Body of pancreas (tissue), 4 donors: ENCODE measurements at regions of chr5 and their contacts with region 1.

Region 1: DNA sequence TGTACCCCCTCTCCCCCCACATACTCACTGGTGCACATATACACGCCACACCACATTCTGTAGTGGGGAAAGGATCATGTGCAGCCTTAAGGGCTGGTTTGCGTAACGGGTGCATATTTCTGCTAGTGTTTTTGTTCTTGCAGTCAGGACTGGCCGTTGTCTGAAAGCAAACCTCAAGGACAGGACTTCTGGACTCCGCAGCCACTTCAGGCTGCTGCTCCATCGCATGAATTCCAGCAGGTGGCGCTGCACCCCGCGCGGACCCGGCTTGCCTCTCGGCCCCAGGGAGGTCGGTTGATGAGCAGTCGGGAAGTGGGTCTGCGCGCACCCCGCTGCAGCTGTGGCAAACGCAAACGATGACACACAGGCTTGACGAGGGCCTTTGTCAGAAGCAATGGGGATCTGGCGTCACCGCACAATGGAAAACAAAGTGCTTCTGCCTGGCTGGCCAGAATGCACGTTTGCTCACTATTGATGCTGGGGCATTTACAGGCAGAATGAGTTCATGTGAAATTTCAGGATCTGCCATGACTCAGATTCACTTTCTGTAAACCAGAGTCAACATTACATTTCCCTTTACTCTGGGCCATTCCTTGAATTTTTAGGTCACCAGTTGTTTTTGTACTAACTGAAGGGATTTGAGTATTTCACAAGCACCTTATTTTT is 36.3 kb upstream of the GLRX start:
- DNase-seq: peak; percentile 84 to 91 (median 86)
- ATAC-seq: peak; percentile 81
- H3K4me3 ChIP-seq: no peak overlapping the region
- H3K27ac ChIP-seq: peak overlapping the region; percentile 72 to 89 (median 79)
- H3K4me1 ChIP-seq: peaks cover 63% of the 10 kb centered on the region
- H3K27me3 ChIP-seq: no peaks in the 10 kb centered on the region
- CTCF ChIP-seq: peak; percentile 97 to 99 (median 98)
- POLR2A ChIP-seq: peak in 2 of 3 donors; percentile 41 to 42

Region 2: GRCh38 chr5:95961617-95962474 is 103.1 kb after region 1 on chr5 and contains the start of gene ELL2:
- intact Hi-C with region 1: no loop called
- DNase-seq: peak; percentile 99 to 100 (median 99)
- ATAC-seq: peak; percentile 87
- H3K4me3 ChIP-seq: peak within 1 kb of the TSS; percentile 28 to 98
- H3K27ac ChIP-seq: peak within 1 kb of the TSS; percentile 97 to 100 (median 100)
- H3K4me1 ChIP-seq: peaks cover 45% of the 10 kb centered on the region
- H3K27me3 ChIP-seq: no peaks in the 10 kb centered on the region
- CTCF ChIP-seq: no peak
- POLR2A ChIP-seq: peak; percentile 95 to 99 (median 98)
- total RNA-seq, gene ELL2: 100 to 104 TPM

Region 3: DNA sequence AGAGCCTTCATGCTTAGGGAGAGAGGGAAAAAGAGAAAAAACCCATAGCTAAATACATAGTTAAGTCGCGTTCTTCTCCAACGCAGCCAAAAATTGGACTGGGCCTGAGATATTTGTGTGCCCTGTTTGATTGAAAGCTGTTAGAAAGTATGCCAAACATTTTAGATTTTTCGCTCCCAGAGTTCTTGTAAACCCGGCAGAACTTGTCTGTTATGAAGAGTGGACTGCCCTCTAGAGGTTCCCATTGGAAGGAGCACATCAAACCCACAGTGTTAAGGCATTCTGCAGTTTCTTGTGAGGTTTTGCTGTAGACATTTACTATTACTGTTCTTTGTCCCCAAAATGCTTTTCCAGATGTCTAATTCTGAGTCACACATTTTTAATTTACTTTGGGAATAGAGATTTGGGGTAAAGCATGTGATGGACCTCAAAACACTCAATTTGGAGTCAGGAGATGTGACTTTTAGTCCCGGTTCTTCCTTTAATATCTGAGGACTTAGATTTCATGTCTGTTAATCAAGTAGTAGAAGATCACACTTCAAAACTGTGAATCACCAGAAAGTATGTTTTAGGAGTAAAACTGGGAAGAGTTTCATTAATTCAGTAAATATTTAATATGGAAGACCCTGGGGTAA is 477.7 kb after region 1 on chr5:
- intact Hi-C with region 1: loop called (anchors 10 kb)
- DNase-seq: peak; percentile 82 to 90 (median 84)
- ATAC-seq: peak; percentile 77
- H3K4me3 ChIP-seq: no peak overlapping the region
- H3K27ac ChIP-seq: peak overlapping the region; percentile 11 to 77 (median 46)
- H3K4me1 ChIP-seq: peaks cover 72% of the 10 kb centered on the region
- H3K27me3 ChIP-seq: no peaks in the 10 kb centered on the region
- CTCF ChIP-seq: peak; percentile 72 to 94 (median 89)
- POLR2A ChIP-seq: no peak